Activated CD4-positive, alpha-beta memory T cell treated with anti-CD3 and anti-CD28 coated beads for 36 hours (primary cell): ENCODE measurements at regions of chr3 and their contacts with region 1.

Region 1: DNA sequence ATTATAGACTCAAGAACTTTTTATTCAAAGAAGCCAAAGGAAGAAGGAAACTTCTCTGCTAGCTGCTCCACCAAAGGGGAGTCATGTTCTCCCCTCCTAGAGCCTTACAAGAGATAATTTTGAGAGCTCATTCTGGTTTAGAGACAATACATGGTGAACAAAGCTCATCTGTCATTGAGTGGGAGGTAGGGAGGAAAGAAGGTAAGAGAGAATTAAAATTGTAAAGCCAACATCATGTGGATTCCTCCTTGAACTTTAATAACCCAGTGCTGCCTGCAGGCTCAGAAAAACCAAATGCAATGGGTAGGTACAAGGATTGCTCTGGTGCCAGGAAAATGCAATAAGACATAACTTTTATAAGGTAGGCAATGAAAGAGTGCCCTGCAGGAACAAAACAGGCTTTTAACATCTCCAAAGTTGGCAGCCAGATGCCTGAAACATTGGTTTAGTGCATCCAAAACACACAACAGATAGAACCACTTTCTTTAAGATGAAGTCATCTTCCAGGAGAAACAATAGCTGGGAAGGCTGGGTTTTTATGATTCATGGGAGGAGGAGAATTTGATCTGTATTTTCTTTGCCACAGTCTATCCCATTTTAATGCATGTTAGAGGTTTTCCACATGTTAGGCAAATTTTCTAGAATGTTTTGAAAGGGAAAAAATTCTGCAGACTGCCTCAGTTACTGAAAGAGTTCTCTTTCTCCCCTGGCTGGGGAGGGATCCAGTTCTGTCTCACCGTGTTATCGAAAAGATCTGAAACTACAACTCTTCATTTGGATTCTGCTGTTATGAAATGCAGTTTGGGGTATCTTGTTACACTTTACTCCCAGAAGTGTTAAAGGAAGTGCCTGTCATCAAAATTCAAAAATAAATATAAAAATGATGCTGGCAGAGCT is 11.3 kb upstream of the ARHGEF3 start:
- DNase-seq: no peak
- H3K4me3 Mint-ChIP-seq: no peak overlapping the region
- H3K27ac Mint-ChIP-seq: peak overlapping the region; percentile 75
- H3K4me1 Mint-ChIP-seq: peaks cover 78% of the 10 kb centered on the region
- H3K27me3 Mint-ChIP-seq: no peaks in the 10 kb centered on the region

Region 2: GRCh38 chr3:56825567-56826438 is 12.8 kb after region 1 on chr3:
- CTCF ChIA-PET with region 1: interaction called, 9 read pairs
- POLR2A ChIA-PET with region 1: interaction called, 3 read pairs
- intact Hi-C with region 1: loop called (anchors 2 kb)
- DNase-seq: no peak
- H3K4me3 Mint-ChIP-seq: no peak overlapping the region
- H3K27ac Mint-ChIP-seq: no peak overlapping the region
- H3K4me1 Mint-ChIP-seq: peaks cover 48% of the 10 kb centered on the region
- H3K27me3 Mint-ChIP-seq: no peaks in the 10 kb centered on the region